ENCODE measurements at regions of chr11 and their contacts with region 1.

Region 1: GRCh38 chr11:102279641-102280170 is 37.6 kb upstream of the BIRC3 start:
- DNase-seq: peak; percentile 49
- H3K4me3 ChIP-seq: no peak overlapping the region
- H3K27ac ChIP-seq: peak overlapping the region in 1 of 2 donors; percentile 21
- H3K4me1 ChIP-seq: no peaks in the 10 kb centered on the region
- H3K27me3 ChIP-seq: no peaks in the 10 kb centered on the region
- CTCF ChIP-seq: peak in 1 of 4 experiments; percentile 11
- POLR2A ChIP-seq: no peak

Region 2: DNA sequence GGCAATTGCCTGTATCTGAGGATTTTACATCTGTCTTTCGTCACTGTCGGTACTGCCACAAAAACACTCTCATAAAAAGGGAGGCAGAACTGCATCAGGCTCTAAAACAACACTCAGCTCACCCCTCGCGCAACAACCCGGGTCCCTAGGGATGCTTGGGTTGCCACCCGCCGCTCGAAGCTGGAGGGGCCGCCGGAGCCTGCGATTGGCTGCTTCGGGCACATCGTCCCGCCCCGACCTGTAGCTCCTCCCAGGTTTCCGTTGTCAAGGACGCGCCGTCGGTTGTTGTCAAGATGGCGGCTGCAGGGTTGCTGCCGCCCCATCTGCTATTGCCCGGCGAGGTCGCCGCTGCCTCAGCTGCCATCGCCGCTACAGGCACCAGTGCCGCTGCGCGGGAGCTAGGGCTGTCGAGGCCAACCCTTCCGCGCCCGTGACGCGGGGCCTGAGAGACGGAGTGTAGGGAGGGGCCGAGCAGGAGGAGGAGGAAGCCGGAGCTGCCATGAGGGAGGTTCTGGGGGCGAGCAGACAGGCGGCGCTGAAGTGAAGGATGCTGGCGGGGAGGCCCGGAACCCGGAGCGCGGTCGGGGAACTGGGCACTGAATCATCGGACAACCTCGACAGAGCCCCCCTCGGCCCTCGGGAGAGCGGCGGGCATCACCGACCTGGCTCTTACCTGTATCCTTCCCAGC is 364.8 kb before region 1 on chr11 and contains the start of gene CEP126:
- intact Hi-C with region 1: loop called (anchors 10 kb)
- DNase-seq: peak; percentile 89
- H3K4me3 ChIP-seq: peak within 1 kb of the TSS; percentile 60 to 76
- H3K27ac ChIP-seq: peak within 1 kb of the TSS; percentile 68 to 81
- H3K4me1 ChIP-seq: no peaks in the 10 kb centered on the region
- H3K27me3 ChIP-seq: no peaks in the 10 kb centered on the region
- CTCF ChIP-seq: peak in 3 of 4 experiments; percentile 49 to 70 (median 65)
- POLR2A ChIP-seq: peak; percentile 28
- total RNA-seq, gene CEP126: 2.0 to 15.2 TPM

Region 3: GRCh38 chr11:102138223-102138622 is 141.5 kb before region 1 on chr11:
- intact Hi-C with region 1: no loop called
- DNase-seq: no peak
- H3K4me3 ChIP-seq: no peak overlapping the region
- H3K27ac ChIP-seq: no peak overlapping the region
- H3K4me1 ChIP-seq: no peaks in the 10 kb centered on the region
- H3K27me3 ChIP-seq: no peaks in the 10 kb centered on the region
- CTCF ChIP-seq: no peak
- POLR2A ChIP-seq: no peak

Region 4: GRCh38 chr11:102760355-102761035 is 480.8 kb after region 1 on chr11:
- intact Hi-C with region 1: no loop called
- DNase-seq: no peak
- H3K4me3 ChIP-seq: no peak overlapping the region
- H3K27ac ChIP-seq: no peak overlapping the region
- H3K4me1 ChIP-seq: no peaks in the 10 kb centered on the region
- H3K27me3 ChIP-seq: no peaks in the 10 kb centered on the region
- CTCF ChIP-seq: no peak
- POLR2A ChIP-seq: no peak